Activated CD8-positive, alpha-beta T cell treated with anti-CD3 and anti-CD28 coated beads for 36 hours (primary cell): ENCODE measurements at regions of chr7 and their contacts with region 1.

Region 1: DNA sequence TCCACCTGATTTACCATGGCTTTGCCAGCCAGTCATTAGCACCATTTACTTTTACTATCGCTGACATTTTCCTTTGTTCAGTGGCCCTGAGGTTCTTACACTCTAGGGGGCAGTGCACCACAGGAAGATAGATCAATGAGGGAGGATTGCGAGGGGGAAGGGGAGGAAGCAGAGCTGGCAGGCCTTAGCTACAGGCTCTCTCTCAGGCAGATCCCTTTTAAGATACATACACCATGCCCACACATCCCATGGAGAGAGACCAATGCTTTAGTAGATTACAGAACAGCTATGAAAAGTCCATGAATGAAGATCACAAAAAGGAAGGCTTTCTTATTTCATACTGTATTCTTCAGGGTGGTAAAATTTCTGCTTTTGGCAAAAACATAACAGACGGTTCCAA is 47.4 kb downstream of the DENND11 start:
- DNase-seq: peak; percentile 80
- ATAC-seq: peak; percentile 93
- H3K4me3 Mint-ChIP-seq: no peak overlapping the region
- H3K27ac Mint-ChIP-seq: peak overlapping the region; percentile 75
- H3K4me1 Mint-ChIP-seq: peaks cover 6% of the 10 kb centered on the region
- H3K27me3 Mint-ChIP-seq: no peaks in the 10 kb centered on the region
- CTCF ChIP-seq: peak; percentile 64

Region 2: GRCh38 chr7:141466151-141466904 is 188.2 kb before region 1 on chr7:
- CTCF ChIA-PET with region 1: no interaction called
- POLR2A ChIA-PET with region 1: no interaction called
- intact Hi-C with region 1: no loop called
- DNase-seq: no peak
- ATAC-seq: no peak
- H3K4me3 Mint-ChIP-seq: no peak overlapping the region
- H3K27ac Mint-ChIP-seq: no peak overlapping the region
- H3K4me1 Mint-ChIP-seq: no peaks in the 10 kb centered on the region
- H3K27me3 Mint-ChIP-seq: peaks cover 4% of the 10 kb centered on the region
- CTCF ChIP-seq: no peak

Region 3: DNA sequence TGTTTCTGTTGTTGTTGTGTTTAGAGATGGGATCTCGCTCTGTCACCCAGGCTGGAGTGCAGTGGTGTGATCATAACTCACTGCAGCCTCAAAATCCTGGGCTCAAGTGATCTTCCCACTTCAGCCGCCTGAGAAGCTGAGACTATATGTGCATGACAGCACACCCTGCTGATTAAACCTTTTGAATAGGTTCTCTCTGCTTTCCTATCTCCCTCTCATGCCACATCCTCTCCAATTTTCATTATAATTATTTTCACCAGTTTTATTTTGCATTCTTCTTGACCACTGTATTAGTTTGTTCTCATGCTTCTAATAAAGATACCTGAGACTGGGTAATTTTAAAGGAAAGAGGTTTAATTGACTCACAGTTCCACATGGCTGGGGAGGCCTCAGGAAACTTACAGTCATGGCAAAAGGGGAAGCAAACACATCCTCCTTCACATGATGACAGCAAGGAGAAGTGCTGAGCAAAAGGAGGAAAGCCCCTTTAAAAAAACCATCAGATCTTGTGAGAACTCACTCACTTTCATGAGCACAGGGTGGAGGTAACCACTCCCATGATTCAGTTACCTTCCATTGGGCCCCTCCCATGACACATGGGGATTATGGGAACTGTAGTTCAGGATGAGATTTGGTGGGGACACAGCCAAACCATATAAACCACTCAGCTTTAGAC is 90.5 kb before region 1 on chr7:
- CTCF ChIA-PET with region 1: no interaction called
- POLR2A ChIA-PET with region 1: no interaction called
- intact Hi-C with region 1: no loop called
- DNase-seq: peak; percentile 69
- ATAC-seq: peak; percentile 97
- H3K4me3 Mint-ChIP-seq: no peak overlapping the region
- H3K27ac Mint-ChIP-seq: peak overlapping the region; percentile 88
- H3K4me1 Mint-ChIP-seq: peaks cover 65% of the 10 kb centered on the region
- H3K27me3 Mint-ChIP-seq: no peaks in the 10 kb centered on the region
- CTCF ChIP-seq: no peak

Region 4: GRCh38 chr7:141641876-141642275 is 12.7 kb before region 1 on chr7:
- CTCF ChIA-PET with region 1: interaction called, 25 read pairs
- POLR2A ChIA-PET with region 1: interaction called, 3 read pairs
- intact Hi-C with region 1: no loop called
- DNase-seq: no peak
- ATAC-seq: no peak
- H3K4me3 Mint-ChIP-seq: no peak overlapping the region
- H3K27ac Mint-ChIP-seq: no peak overlapping the region
- H3K4me1 Mint-ChIP-seq: no peaks in the 10 kb centered on the region
- H3K27me3 Mint-ChIP-seq: no peaks in the 10 kb centered on the region
- CTCF ChIP-seq: no peak

Region 5: GRCh38 chr7:141701489-141702046 is 47.0 kb after region 1 on chr7:
- CTCF ChIA-PET with region 1: interaction called, 23 read pairs
- POLR2A ChIA-PET with region 1: interaction called, 3 read pairs
- intact Hi-C with region 1: no loop called
- DNase-seq: peak; percentile 86
- ATAC-seq: peak; percentile 88
- H3K4me3 Mint-ChIP-seq: peak overlapping the region; percentile 71
- H3K27ac Mint-ChIP-seq: peak overlapping the region; percentile 68
- H3K4me1 Mint-ChIP-seq: peaks cover 47% of the 10 kb centered on the region
- H3K27me3 Mint-ChIP-seq: peaks cover 2% of the 10 kb centered on the region
- CTCF ChIP-seq: no peak

Region 6: GRCh38 chr7:141785706-141786552 is 131.4 kb after region 1 on chr7:
- CTCF ChIA-PET with region 1: interaction called, 14 read pairs
- POLR2A ChIA-PET with region 1: no interaction called
- intact Hi-C with region 1: no loop called
- DNase-seq: peak; percentile 33
- ATAC-seq: peak; percentile 64
- H3K4me3 Mint-ChIP-seq: no peak overlapping the region
- H3K27ac Mint-ChIP-seq: no peak overlapping the region
- H3K4me1 Mint-ChIP-seq: no peaks in the 10 kb centered on the region
- H3K27me3 Mint-ChIP-seq: no peaks in the 10 kb centered on the region
- CTCF ChIP-seq: peak; percentile 83